Right cardiac atrium (tissue), 5 donors: ENCODE measurements at regions of chr2 and their contacts with region 1.

Region 1: DNA sequence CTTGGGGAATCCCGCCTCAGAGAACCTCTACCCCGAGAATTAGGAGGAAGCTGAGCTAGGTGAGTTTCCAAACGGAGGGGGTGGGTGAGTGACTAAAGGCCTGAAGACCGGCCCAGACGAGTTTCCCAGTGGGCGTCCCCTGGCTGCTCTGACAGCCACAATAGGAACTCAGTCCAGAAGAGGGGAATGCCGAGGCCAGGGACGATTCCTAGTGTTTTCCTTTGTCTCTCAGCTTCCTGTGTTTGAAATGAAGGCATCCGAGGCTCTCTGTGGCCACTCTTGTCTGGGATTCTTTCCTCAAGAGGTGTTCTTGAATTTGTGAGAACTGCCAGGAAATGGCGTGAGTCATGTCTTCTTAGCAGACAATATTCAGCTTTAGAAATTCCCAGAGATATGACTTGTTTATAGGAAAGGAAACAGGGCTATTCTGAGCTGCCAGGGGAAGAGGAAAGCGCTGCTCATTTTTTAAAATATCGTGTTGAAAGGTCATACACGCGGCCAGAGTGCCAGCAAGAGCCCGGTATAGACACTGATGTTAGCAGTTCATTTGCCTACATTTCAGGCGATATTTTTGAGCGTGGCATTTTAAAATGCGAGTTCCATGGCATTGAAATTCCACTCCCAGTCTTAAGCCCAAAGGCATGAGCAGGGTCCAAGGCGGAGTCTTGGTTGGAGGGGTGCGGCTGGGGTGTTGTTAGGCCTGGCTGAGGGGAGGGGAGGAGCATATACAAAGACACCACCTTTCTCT is 169.1 kb upstream of the KLF7 start:
- DNase-seq: peak; percentile 75 to 80 (median 76)
- ATAC-seq: peak; percentile 87 to 92
- H3K4me3 ChIP-seq: peak overlapping the region; percentile 26
- H3K27ac ChIP-seq: peak overlapping the region; percentile 93
- H3K4me1 ChIP-seq: peaks cover 5% of the 10 kb centered on the region
- H3K27me3 ChIP-seq: no peaks in the 10 kb centered on the region

Region 2: DNA sequence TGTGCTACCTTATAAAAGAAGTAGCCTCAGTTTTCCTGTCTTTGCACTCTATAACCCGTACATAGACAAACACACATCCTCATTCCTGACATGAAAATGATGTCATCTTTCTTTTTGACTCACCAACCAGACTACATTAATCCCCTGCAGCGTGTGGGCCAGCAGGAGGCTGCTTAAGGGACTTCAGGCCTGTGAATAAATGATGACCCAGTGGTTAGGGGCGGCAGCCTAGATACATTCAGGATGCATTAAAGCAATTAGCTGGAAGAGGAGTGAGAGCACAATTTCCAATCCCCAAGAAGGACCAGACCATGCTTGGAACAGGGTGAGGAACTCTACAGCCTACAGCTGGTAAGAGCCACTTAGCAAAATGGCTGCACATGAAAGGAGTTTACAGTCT is 111.7 kb before region 1 on chr2:
- intact Hi-C with region 1: loop called in 1 of 4 experiments (anchors 10 kb)
- DNase-seq: no peak
- ATAC-seq: no peak
- H3K4me3 ChIP-seq: no peak overlapping the region
- H3K27ac ChIP-seq: no peak overlapping the region
- H3K4me1 ChIP-seq: peaks cover 4% of the 10 kb centered on the region
- H3K27me3 ChIP-seq: no peaks in the 10 kb centered on the region

Region 3: GRCh38 chr2:207408086-207408794 is 73.4 kb after region 1 on chr2:
- intact Hi-C with region 1: no loop called
- DNase-seq: no peak
- ATAC-seq: no peak
- H3K4me3 ChIP-seq: no peak overlapping the region
- H3K27ac ChIP-seq: no peak overlapping the region
- H3K4me1 ChIP-seq: peaks cover 9% of the 10 kb centered on the region
- H3K27me3 ChIP-seq: no peaks in the 10 kb centered on the region

Region 4: GRCh38 chr2:207467716-207468347 is 133.0 kb after region 1 on chr2:
- intact Hi-C with region 1: loop called in 1 of 4 experiments (anchors 10 kb)
- DNase-seq: no peak
- ATAC-seq: no peak
- H3K4me3 ChIP-seq: no peak overlapping the region
- H3K27ac ChIP-seq: no peak overlapping the region
- H3K4me1 ChIP-seq: no peaks in the 10 kb centered on the region
- H3K27me3 ChIP-seq: no peaks in the 10 kb centered on the region